H1 (cell line): ENCODE measurements at regions of chr22 and their contacts with region 1.

Region 1: DNA sequence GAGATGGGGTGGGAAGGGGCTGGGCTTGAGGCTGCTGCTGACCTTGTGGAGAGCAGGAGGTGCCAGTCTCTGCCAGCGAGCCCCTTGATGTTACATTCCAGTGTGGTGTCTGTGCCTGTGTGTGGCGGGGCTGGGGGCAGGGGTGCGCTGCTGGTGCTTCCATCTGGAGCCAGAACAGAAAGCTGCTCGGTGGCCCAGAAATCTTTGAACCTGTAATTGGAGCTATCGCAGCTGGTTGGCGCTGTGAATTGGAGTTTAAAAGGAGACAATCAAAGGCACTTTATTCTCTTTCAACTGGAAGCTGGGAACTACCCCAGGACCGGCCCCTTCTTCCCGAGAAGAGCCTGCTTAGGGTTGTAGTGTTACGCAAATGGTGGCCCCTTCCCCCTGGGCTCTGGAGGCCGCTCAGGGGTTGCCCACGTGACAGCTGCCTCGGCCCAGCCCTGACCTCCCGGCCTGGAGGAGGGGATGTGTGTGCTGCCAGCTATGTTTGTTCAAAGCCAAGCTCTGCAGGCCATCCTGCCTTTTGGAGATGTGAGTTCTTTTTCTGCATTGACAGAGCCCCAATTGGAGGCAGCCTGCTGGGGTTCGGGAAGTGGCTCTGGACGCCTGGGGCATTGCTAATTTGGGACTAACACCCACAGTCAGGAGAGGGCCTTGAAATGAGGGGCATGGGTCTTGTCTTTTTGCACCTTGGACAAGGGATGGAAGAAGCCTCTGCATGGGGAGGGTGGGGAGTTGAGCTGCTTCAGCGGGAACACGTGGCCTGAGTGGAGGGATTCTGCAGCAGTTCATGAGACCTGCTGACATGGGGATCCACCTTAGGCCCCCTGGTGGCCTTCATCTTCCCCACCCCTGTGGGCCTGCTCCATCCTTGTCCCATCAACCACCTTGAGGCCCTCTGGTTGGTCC is 14.0 kb upstream of the ARSA start:
- DNase-seq: peak; percentile 75 to 79
- H3K4me3 ChIP-seq: peak overlapping the region in 3 of 4 experiments; percentile 16 to 44 (median 31); a peak in 5 of 8 replicates
- H3K27ac ChIP-seq: peak overlapping the region; percentile 54; the same call in 1 of the 2 replicates
- H3K4me1 ChIP-seq: peaks cover 4 to 21% (median 17%) of the 10 kb centered on the region in 4 experiments
- H3K27me3 ChIP-seq: peaks cover 0 to 23% (median 17%) of the 10 kb centered on the region in 4 experiments; a peak in 6 of 7 replicates
- CTCF ChIP-seq: peak; percentile 22 to 45 (median 28); a peak in 3 of 4 replicates
- EP300 ChIP-seq: peak in 1 of 2 experiments; percentile 21; a peak in 1 of 3 replicates
- POLR2A ChIP-seq: no peak
- RAD21 ChIP-seq: peak; percentile 26 to 39; a peak in 3 of 4 replicates

Region 2: GRCh38 chr22:50627642-50628542 is 14.1 kb before region 1 on chr22 and contains the start of gene ARSA:
- CTCF ChIA-PET with region 1: interaction called, 74 read pairs
- POLR2A ChIA-PET with region 1: interaction called, 8 read pairs
- DNase-seq: peak in 1 of 2 experiments; percentile 79
- H3K4me3 ChIP-seq: peak within 1 kb of the TSS; percentile 60 to 76 (median 76)
- H3K27ac ChIP-seq: no peak within 1 kb of the TSS
- H3K4me1 ChIP-seq: peaks cover 0 to 9% (median 6%) of the 10 kb centered on the region in 4 experiments; a peak in 5 of 7 replicates
- H3K27me3 ChIP-seq: peaks cover 0 to 10% (median 5%) of the 10 kb centered on the region in 4 experiments; a peak in 4 of 7 replicates
- CTCF ChIP-seq: peak; percentile 29 to 54 (median 41)
- EP300 ChIP-seq: no peak
- POLR2A ChIP-seq: no peak
- RAD21 ChIP-seq: peak; percentile 36 to 60; a peak in 3 of 4 replicates
- total RNA-seq, gene ARSA: 7.7 and 9.8 TPM in 2 replicates

Region 3: GRCh38 chr22:50674606-50675549 is 32.9 kb after region 1 on chr22:
- CTCF ChIA-PET with region 1: interaction called, 13 read pairs
- POLR2A ChIA-PET with region 1: interaction called, 4 read pairs
- DNase-seq: peak; percentile 57 to 90
- H3K4me3 ChIP-seq: peak overlapping the region; percentile 51 to 70 (median 62)
- H3K27ac ChIP-seq: no peak overlapping the region; the same call in 1 of the 2 replicates
- H3K4me1 ChIP-seq: peaks cover 0 to 16% (median 9%) of the 10 kb centered on the region in 4 experiments; a peak in 6 of 7 replicates
- H3K27me3 ChIP-seq: peaks cover 3 to 21% (median 16%) of the 10 kb centered on the region in 4 experiments
- CTCF ChIP-seq: no peak
- EP300 ChIP-seq: no peak
- POLR2A ChIP-seq: no peak
- RAD21 ChIP-seq: peak in 1 of 2 experiments; percentile 29; a peak in 2 of 4 replicates

Region 4: GRCh38 chr22:50691521-50691920 is 49.6 kb after region 1 on chr22:
- CTCF ChIA-PET with region 1: interaction called, 16 read pairs
- POLR2A ChIA-PET with region 1: no interaction called
- DNase-seq: peak in 1 of 2 experiments; percentile 48
- H3K4me3 ChIP-seq: no peak overlapping the region
- H3K27ac ChIP-seq: no peak overlapping the region
- H3K4me1 ChIP-seq: no peaks in the 10 kb centered on the region
- H3K27me3 ChIP-seq: peaks cover 0 to 2% (median under 1%) of the 10 kb centered on the region in 4 experiments; a peak in 2 of 7 replicates
- CTCF ChIP-seq: peak in 2 of 3 experiments; percentile 67 to 68; a peak in 3 of 4 replicates
- EP300 ChIP-seq: no peak
- POLR2A ChIP-seq: no peak
- RAD21 ChIP-seq: peak; percentile 76 to 78

Region 5: DNA sequence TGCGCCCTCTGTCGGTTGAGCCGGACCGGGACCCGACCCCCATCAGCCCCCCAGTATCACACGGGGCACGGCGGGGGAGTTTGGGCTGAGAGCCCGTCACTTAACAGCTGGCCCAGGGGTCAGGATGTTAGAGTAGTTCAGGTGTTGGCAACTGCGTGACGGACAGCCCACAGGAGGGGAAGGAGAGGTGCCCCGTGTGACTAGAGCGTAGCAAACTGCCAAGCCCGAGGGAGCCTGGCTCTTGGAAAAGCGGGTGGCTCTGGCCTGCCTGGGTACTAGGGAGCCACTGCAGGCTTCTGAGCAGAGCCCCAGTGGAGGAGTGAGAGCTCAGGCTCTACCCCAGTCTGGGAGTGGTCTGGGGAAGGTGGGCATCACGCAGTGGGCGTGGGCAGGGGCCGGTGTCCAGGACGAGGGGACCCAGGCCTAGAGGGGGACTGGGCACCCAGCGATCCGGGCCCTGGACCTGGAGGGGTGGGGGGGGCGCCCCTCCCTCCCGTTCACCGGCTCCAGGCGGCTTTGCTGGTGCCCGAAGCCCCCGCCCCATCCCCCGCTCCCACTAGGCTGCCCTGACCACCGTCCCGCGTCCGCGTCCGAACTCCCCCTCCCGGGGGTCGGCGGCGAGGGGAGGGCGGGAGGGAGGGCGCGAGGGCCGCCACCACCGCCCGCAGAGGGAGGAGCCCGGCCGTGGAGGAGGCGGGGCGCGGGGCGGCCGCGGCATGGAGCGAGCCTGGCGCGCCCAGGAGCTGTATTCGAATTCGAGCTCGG is 55.0 kb after region 1 on chr22:
- CTCF ChIA-PET with region 1: interaction called, 16 read pairs
- POLR2A ChIA-PET with region 1: no interaction called
- DNase-seq: peak in 1 of 2 experiments; percentile 84
- H3K4me3 ChIP-seq: peak overlapping the region; percentile 11 to 58 (median 16); a peak in 6 of 8 replicates
- H3K27ac ChIP-seq: no peak overlapping the region
- H3K4me1 ChIP-seq: peaks cover 0 to 10% (median 0%) of the 10 kb centered on the region in 4 experiments; a peak in 4 of 7 replicates
- H3K27me3 ChIP-seq: peaks cover 6 to 24% (median 14%) of the 10 kb centered on the region in 4 experiments; a peak in 6 of 7 replicates
- CTCF ChIP-seq: peak; percentile 71 to 77 (median 76)
- EP300 ChIP-seq: no peak
- POLR2A ChIP-seq: no peak
- RAD21 ChIP-seq: peak in 1 of 2 experiments; percentile 70; a peak in 3 of 4 replicates